ENCODE measurements at regions of chr20 and their contacts with region 1.

Region 1: GRCh38 chr20:29119141-29119540 is 2138.3 kb upstream of the DEFB115 start:
- DNase-seq: no peak
- ATAC-seq: no peak
- H3K4me3 ChIP-seq: no peak overlapping the region
- H3K27ac ChIP-seq: no peak overlapping the region
- H3K4me1 ChIP-seq: no peaks in the 10 kb centered on the region; a peak in 1 of 5 replicates
- H3K27me3 ChIP-seq: no peaks in the 10 kb centered on the region
- CTCF ChIP-seq: no peak
- EP300 ChIP-seq: no peak
- POLR2A ChIP-seq: no peak
- RAD21 ChIP-seq: no peak

Region 2: DNA sequence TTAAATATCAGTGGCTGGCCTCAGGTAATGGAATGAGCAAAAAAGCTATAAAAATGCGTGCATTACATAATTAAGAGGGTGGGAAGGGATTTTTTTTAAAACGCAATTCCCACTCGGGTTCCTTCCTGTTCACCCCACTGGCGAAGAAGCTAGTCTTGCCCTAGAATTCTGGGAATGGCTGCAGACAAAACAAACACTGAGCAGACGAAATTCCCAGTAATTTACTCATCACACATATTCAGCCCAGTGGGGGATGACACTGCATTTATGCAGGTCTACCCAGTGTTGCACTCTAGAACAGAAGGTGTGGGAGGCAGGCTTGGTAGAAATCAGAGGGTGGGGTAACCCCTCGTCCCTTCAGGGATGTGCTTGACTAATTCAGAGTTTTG is 556.6 kb before region 1 on chr20:
- CTCF ChIA-PET with region 1: no interaction called
- POLR2A ChIA-PET with region 1: no interaction called
- in situ Hi-C with region 1: loop called (anchors 5 kb)
- intact Hi-C with region 1: no loop called
- DNase-seq: peak; percentile 3 to 24 (median 10)
- ATAC-seq: peak; percentile 61; the same call in 2 of the 3 replicates
- H3K4me3 ChIP-seq: no peak overlapping the region
- H3K27ac ChIP-seq: no peak overlapping the region
- H3K4me1 ChIP-seq: no peaks in the 10 kb centered on the region
- H3K27me3 ChIP-seq: no peaks in the 10 kb centered on the region
- CTCF ChIP-seq: no peak
- EP300 ChIP-seq: no peak
- POLR2A ChIP-seq: no peak
- RAD21 ChIP-seq: no peak

Region 3: GRCh38 chr20:29790510-29790909 is 671.4 kb after region 1 on chr20:
- CTCF ChIA-PET with region 1: no interaction called
- POLR2A ChIA-PET with region 1: no interaction called
- in situ Hi-C with region 1: loop called (anchors 25 kb)
- intact Hi-C with region 1: no loop called
- DNase-seq: no peak
- ATAC-seq: no peak
- H3K4me3 ChIP-seq: no peak overlapping the region
- H3K27ac ChIP-seq: no peak overlapping the region
- H3K4me1 ChIP-seq: peaks cover 0 to 4% of the 10 kb centered on the region in 2 experiments; a peak in 2 of 5 replicates
- H3K27me3 ChIP-seq: no peaks in the 10 kb centered on the region
- CTCF ChIP-seq: no peak
- EP300 ChIP-seq: no peak
- POLR2A ChIP-seq: no peak
- RAD21 ChIP-seq: no peak

Region 4: DNA sequence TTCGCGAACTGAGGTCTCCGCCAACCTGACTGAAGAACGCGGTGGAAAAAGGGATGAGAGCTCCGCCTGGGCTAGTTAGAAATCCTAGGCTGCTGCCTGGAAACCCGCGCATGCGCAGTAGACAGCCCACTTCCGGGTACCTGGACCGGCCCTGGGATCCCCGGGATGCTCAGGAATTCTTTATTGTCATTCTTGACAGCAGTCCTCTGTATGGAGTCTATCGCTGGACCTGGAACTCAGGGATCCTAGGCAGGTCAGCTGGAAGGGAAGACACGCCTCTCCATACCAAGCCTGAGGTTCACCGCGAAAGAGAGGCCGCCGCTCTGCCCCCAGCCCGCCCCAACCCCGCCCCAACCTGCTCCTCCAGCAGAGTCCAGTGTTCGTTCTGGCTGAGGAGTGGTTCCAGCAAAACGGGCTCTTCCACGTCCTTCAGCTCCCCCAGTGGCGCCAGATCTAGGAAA is 759.2 kb after region 1 on chr20:
- CTCF ChIA-PET with region 1: no interaction called
- POLR2A ChIA-PET with region 1: no interaction called
- in situ Hi-C with region 1: loop called (anchors 5 kb)
- intact Hi-C with region 1: no loop called
- DNase-seq: peak in 3 of 4 experiments; percentile 27 to 91 (median 37)
- ATAC-seq: peak; percentile 85
- H3K4me3 ChIP-seq: peak overlapping the region; percentile 17
- H3K27ac ChIP-seq: no peak overlapping the region
- H3K4me1 ChIP-seq: peaks cover 2 to 27% of the 10 kb centered on the region in 2 experiments; a peak in 3 of 5 replicates
- H3K27me3 ChIP-seq: no peaks in the 10 kb centered on the region
- CTCF ChIP-seq: no peak
- EP300 ChIP-seq: no peak
- POLR2A ChIP-seq: no peak
- RAD21 ChIP-seq: no peak

Region 5: DNA sequence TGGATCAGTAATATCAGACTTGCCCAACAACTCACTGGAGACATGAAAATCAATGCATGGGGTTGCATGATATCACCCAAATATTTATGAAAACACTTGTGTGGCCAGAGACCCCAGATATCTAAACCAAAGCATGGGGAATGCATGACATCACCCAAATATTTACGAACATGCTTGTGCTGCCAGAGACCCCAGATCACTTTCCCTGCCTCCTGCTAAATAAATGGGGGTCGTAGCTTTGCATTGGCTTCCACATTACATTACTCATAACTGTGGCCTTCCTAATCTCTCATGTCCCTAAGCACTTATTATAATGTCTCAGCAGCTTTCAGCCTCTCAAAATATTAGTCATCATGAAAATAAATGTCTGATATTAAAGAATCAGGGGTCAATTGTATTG is 1300.3 kb after region 1 on chr20:
- CTCF ChIA-PET with region 1: no interaction called
- POLR2A ChIA-PET with region 1: no interaction called
- in situ Hi-C with region 1: loop called (anchors 5 kb)
- intact Hi-C with region 1: no loop called
- DNase-seq: no peak
- ATAC-seq: no peak
- H3K4me3 ChIP-seq: no peak overlapping the region
- H3K27ac ChIP-seq: no peak overlapping the region
- H3K4me1 ChIP-seq: no peaks in the 10 kb centered on the region; a peak in 1 of 5 replicates
- H3K27me3 ChIP-seq: 0 out of 5 replicates have a peak, but pooled peaks cover 0 to 2% of the 10 kb centered on the region in 2 experiments
- CTCF ChIP-seq: no peak
- EP300 ChIP-seq: no peak
- POLR2A ChIP-seq: no peak
- RAD21 ChIP-seq: no peak